CD8-positive, alpha-beta T cell (primary cell): ENCODE measurements at regions of chr3 and their contacts with region 1.

Region 1: GRCh38 chr3:161423911-161424522 is 52.7 kb upstream of the SPTSSB start:
- DNase-seq: peak in 2 of 9 experiments; percentile 55 to 63
- ATAC-seq: peak; percentile 57
- H3K4me3 ChIP-seq: no peak overlapping the region
- H3K4me3 Mint-ChIP-seq: no peak overlapping the region
- H3K27ac ChIP-seq: no peak overlapping the region
- H3K27ac Mint-ChIP-seq: no peak overlapping the region
- H3K4me1 ChIP-seq: no peaks in the 10 kb centered on the region
- H3K4me1 Mint-ChIP-seq: no peaks in the 10 kb centered on the region
- H3K27me3 ChIP-seq: no peaks in the 10 kb centered on the region
- H3K27me3 Mint-ChIP-seq: peaks cover 5% of the 10 kb centered on the region
- CTCF ChIP-seq: peak; percentile 78

Region 2: GRCh38 chr3:160707187-160707794 is 716.7 kb before region 1 on chr3:
- CTCF ChIA-PET with region 1: no interaction called
- POLR2A ChIA-PET with region 1: no interaction called
- intact Hi-C with region 1: loop called (anchors 1 to 2 kb)
- DNase-seq: peak in 6 of 9 experiments; percentile 3 to 75 (median 23)
- ATAC-seq: peak; percentile 49
- H3K4me3 ChIP-seq: no peak overlapping the region
- H3K4me3 Mint-ChIP-seq: no peak overlapping the region
- H3K27ac ChIP-seq: no peak overlapping the region
- H3K27ac Mint-ChIP-seq: no peak overlapping the region
- H3K4me1 ChIP-seq: no peaks in the 10 kb centered on the region
- H3K4me1 Mint-ChIP-seq: no peaks in the 10 kb centered on the region
- H3K27me3 ChIP-seq: peaks cover 0 to 4% of the 10 kb centered on the region in 2 experiments
- H3K27me3 Mint-ChIP-seq: peaks cover 29% of the 10 kb centered on the region
- CTCF ChIP-seq: peak; percentile 65

Region 3: DNA sequence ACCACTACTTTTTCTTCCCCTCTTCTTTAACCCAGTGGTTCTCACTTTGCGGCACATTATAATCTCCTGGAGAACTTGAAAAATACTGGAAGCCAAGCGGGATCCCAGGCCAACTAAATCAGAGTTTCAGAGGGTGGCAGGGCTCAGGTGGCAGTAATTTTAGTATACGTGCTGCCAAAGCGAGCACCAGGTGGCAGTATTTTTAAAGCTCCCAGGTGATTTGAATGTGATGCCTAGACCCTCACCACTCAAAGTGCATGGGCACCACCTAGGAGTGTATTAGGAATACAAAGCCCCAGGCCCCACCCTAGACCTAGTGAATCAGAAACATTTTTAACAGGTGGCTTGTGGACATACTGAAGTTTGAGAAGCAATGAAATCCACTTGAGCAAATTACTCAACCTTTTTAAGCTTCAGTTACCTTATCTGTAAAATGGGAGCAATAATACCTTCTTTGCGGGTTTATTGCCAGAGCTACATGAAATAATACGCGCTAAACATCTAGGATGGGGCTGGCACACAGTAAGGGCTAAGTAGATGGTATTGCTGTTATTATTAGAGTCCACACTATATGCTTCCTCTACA is 327.2 kb before region 1 on chr3:
- CTCF ChIA-PET with region 1: interaction called, 13 read pairs
- POLR2A ChIA-PET with region 1: no interaction called
- intact Hi-C with region 1: loop called (anchors 1 kb)
- DNase-seq: peak in 3 of 9 experiments; percentile 19 to 40 (median 28)
- ATAC-seq: no peak
- H3K4me3 ChIP-seq: no peak overlapping the region
- H3K4me3 Mint-ChIP-seq: no peak overlapping the region
- H3K27ac ChIP-seq: no peak overlapping the region
- H3K27ac Mint-ChIP-seq: no peak overlapping the region
- H3K4me1 ChIP-seq: no peaks in the 10 kb centered on the region
- H3K4me1 Mint-ChIP-seq: no peaks in the 10 kb centered on the region
- H3K27me3 ChIP-seq: no peaks in the 10 kb centered on the region
- H3K27me3 Mint-ChIP-seq: no peaks in the 10 kb centered on the region
- CTCF ChIP-seq: no peak

Region 4: DNA sequence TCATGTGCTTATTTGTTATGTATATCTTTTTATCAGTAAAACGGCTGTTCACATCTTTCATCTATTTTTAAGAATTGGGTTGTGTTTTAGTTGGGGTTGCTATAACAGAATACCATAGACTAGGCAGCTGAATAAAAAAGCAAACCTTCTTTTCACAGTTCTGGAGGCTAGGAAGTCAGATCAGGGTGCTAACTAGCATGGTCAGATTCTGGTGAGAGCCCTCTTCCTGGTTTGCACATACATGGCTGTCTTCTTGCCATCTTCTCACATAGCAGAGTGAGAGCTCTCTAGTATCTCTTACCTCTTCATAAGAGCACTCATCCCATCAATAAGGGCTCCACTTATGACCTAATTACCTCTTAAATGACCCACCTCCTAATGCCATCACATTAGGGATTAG is 169.2 kb before region 1 on chr3:
- CTCF ChIA-PET with region 1: no interaction called
- POLR2A ChIA-PET with region 1: no interaction called
- intact Hi-C with region 1: no loop called
- DNase-seq: peak in 2 of 9 experiments; percentile 6
- ATAC-seq: no peak
- H3K4me3 ChIP-seq: no peak overlapping the region
- H3K4me3 Mint-ChIP-seq: no peak overlapping the region
- H3K27ac ChIP-seq: no peak overlapping the region
- H3K27ac Mint-ChIP-seq: no peak overlapping the region
- H3K4me1 ChIP-seq: no peaks in the 10 kb centered on the region
- H3K4me1 Mint-ChIP-seq: peaks cover 3% of the 10 kb centered on the region
- H3K27me3 ChIP-seq: no peaks in the 10 kb centered on the region
- H3K27me3 Mint-ChIP-seq: no peaks in the 10 kb centered on the region
- CTCF ChIP-seq: no peak